Ovary (tissue), 10 donors: ENCODE measurements at regions of chr7 and their contacts with region 1.

Region 1: GRCh38 chr7:101954499-101954898 is 137.1 kb downstream of the CUX1 start:
- DNase-seq: no peak
- H3K4me3 ChIP-seq: no peak overlapping the region
- H3K27ac ChIP-seq: no peak overlapping the region
- H3K4me1 ChIP-seq: peaks cover 3% of the 10 kb centered on the region
- H3K27me3 ChIP-seq: no peaks in the 10 kb centered on the region
- CTCF ChIP-seq: no peak
- EP300 ChIP-seq: no peak
- POLR2A ChIP-seq: no peak

Region 2: GRCh38 chr7:101911800-101912715 is 42.4 kb before region 1 on chr7:
- intact Hi-C with region 1: loop called in 1 of 4 experiments (anchors 1 kb)
- DNase-seq: peak; percentile 71 to 87 (median 82)
- H3K4me3 ChIP-seq: no peak overlapping the region
- H3K27ac ChIP-seq: peak overlapping the region; percentile 69 to 99
- H3K4me1 ChIP-seq: peaks cover 29% of the 10 kb centered on the region
- H3K27me3 ChIP-seq: no peaks in the 10 kb centered on the region
- CTCF ChIP-seq: peak; percentile 17 to 53 (median 35)
- EP300 ChIP-seq: peak; percentile 66
- POLR2A ChIP-seq: peak; percentile 13